SK-N-SH (cell line): ENCODE measurements at regions of chr1 and their contacts with region 1.

Region 1: DNA sequence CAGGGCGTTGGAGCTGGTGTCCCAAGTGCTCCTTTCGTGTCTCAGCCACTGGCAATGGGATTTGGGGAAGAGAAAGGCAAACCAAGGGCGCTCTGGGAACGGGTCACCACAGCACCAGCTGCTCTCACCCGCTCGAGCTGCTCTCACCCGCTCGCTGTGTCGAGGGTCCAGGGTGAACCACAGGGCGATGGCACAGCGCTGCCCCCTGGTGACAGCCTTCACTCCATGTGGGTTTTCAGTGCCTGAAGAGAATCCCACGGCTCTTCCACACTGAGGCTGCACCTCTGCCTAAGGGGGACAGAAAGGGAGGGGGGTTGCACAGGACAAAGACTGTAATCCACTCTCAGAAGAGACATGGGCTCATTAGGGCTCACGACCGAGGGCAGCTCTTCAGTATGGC is 7.1 kb upstream of the CLDN19 start:
- DNase-seq: peak; percentile 84
- H3K4me3 ChIP-seq: no peak overlapping the region
- H3K27ac ChIP-seq: no peak overlapping the region
- H3K4me1 ChIP-seq: peaks cover 0 to 20% of the 10 kb centered on the region in 2 experiments; a peak in 1 of 4 replicates
- H3K27me3 ChIP-seq: no peaks in the 10 kb centered on the region
- CTCF ChIP-seq: peak; percentile 60
- EP300 ChIP-seq: no peak
- RAD21 ChIP-seq: peak; percentile 73

Region 2: DNA sequence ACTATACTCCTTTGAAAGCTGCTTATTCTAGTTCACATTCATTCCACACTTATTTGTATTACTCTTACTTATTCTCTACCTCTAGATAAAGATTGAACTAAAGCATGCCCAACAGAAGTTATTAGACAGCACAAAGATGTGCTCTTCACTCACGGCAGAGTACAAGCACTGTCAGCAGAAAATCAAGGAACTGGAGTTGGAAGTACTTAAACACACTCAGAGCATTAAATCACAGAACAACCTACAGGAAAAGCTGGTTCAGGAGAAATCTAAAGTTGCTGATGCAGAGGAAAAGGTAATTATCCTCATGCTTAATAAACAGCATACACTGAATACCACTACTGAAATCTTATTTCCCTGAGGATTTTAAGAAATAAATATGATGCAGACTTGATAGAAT is 170.2 kb before region 1 on chr1:
- CTCF ChIA-PET with region 1: interaction called, 32 read pairs
- POLR2A ChIA-PET with region 1: no interaction called
- DNase-seq: no peak
- H3K4me3 ChIP-seq: no peak overlapping the region
- H3K27ac ChIP-seq: no peak overlapping the region
- H3K4me1 ChIP-seq: no peaks in the 10 kb centered on the region
- H3K27me3 ChIP-seq: no peaks in the 10 kb centered on the region
- CTCF ChIP-seq: no peak
- EP300 ChIP-seq: no peak
- RAD21 ChIP-seq: no peak

Region 3: GRCh38 chr1:42676536-42677087 is 70.5 kb before region 1 on chr1:
- CTCF ChIA-PET with region 1: interaction called, 10 read pairs
- POLR2A ChIA-PET with region 1: interaction called, 7 read pairs
- DNase-seq: no peak
- H3K4me3 ChIP-seq: no peak overlapping the region
- H3K27ac ChIP-seq: no peak overlapping the region
- H3K4me1 ChIP-seq: peaks cover 0 to 6% of the 10 kb centered on the region in 2 experiments; a peak in 2 of 4 replicates
- H3K27me3 ChIP-seq: no peaks in the 10 kb centered on the region
- CTCF ChIP-seq: no peak
- EP300 ChIP-seq: no peak
- RAD21 ChIP-seq: no peak

Region 4: GRCh38 chr1:42700006-42700405 is 47.1 kb before region 1 on chr1:
- CTCF ChIA-PET with region 1: no interaction called
- POLR2A ChIA-PET with region 1: no interaction called
- DNase-seq: no peak
- H3K4me3 ChIP-seq: no peak overlapping the region
- H3K27ac ChIP-seq: no peak overlapping the region
- H3K4me1 ChIP-seq: no peaks in the 10 kb centered on the region
- H3K27me3 ChIP-seq: no peaks in the 10 kb centered on the region
- CTCF ChIP-seq: no peak
- EP300 ChIP-seq: no peak
- RAD21 ChIP-seq: no peak

Region 5: GRCh38 chr1:42756956-42757891 is 10.1 kb after region 1 on chr1:
- CTCF ChIA-PET with region 1: interaction called, 15 read pairs
- POLR2A ChIA-PET with region 1: no interaction called
- DNase-seq: peak; percentile 82
- H3K4me3 ChIP-seq: no peak overlapping the region; a peak in 1 of 4 replicates
- H3K27ac ChIP-seq: peak overlapping the region in 1 of 2 experiments; percentile 0; a peak in 1 of 4 replicates
- H3K4me1 ChIP-seq: no peaks in the 10 kb centered on the region; a peak in 1 of 4 replicates
- H3K27me3 ChIP-seq: no peaks in the 10 kb centered on the region
- CTCF ChIP-seq: peak; percentile 70
- EP300 ChIP-seq: no peak
- RAD21 ChIP-seq: peak; percentile 60